Activated naive CD8-positive, alpha-beta T cell treated with anti-CD3 and anti-CD28 coated beads, Interleukin-2, amount 10 ng/mL, durations not matched to agents 7 days and 5 days (primary cell): ENCODE measurements at regions of chr1 and their contacts with region 1.

Region 1: GRCh38 chr1:45583264-45583665 is 576 bp upstream of the NASP start:
- DNase-seq: peak; percentile 90
- ATAC-seq: peak; percentile 75
- H3K4me3 Mint-ChIP-seq: peak overlapping the region; percentile 93
- H3K27ac Mint-ChIP-seq: peak overlapping the region; percentile 100
- H3K4me1 Mint-ChIP-seq: peaks cover 23% of the 10 kb centered on the region
- H3K27me3 Mint-ChIP-seq: no peaks in the 10 kb centered on the region

Region 2: DNA sequence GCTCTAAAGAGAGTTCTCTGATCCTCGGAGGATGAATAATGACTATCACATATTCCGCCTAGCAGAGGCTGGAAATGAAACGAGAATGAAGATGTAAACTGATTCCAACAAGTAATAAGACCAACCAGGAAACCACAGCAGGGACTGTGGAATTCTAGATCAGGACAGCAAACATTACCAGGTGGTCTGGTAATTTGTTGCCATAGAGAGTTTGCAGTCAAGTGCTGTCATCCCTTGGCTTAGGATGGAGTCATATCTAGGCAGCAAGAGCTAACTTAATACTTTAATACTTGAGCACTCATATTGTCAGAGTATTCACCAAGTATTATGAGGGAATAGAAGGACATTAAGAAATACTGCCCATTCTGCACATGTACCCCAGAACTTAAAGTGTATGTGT is 198.0 kb before region 1 on chr1:
- POLR2A ChIA-PET with region 1: no interaction called
- DNase-seq: no peak
- ATAC-seq: no peak
- H3K4me3 Mint-ChIP-seq: no peak overlapping the region
- H3K27ac Mint-ChIP-seq: no peak overlapping the region
- H3K4me1 Mint-ChIP-seq: no peaks in the 10 kb centered on the region
- H3K27me3 Mint-ChIP-seq: no peaks in the 10 kb centered on the region

Region 3: DNA sequence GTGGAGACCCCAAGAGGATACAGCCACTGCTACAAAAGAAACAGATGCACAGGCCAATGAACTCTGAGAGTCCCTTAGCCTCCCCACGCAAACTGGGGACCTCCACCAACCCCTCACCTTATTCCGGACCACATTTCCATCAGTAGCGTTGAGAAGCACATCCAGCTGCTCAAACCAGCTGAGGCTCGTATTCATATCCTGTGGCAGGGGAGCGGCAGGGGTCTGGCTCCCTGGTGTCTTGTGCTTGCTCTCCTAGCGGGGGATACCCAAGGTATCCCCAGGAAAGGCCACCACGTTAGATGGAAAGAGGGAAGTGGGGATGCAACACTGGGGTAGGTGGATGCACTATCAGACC is 83.9 kb before region 1 on chr1:
- POLR2A ChIA-PET with region 1: interaction called, 32 read pairs
- DNase-seq: no peak
- ATAC-seq: no peak
- H3K4me3 Mint-ChIP-seq: peak overlapping the region; percentile 94
- H3K27ac Mint-ChIP-seq: peak overlapping the region; percentile 94
- H3K4me1 Mint-ChIP-seq: peaks cover 24% of the 10 kb centered on the region
- H3K27me3 Mint-ChIP-seq: no peaks in the 10 kb centered on the region

Region 4: GRCh38 chr1:45550401-45551351 is 32.6 kb before region 1 on chr1 and contains the start of gene AKR1A1:
- POLR2A ChIA-PET with region 1: interaction called, 21 read pairs
- DNase-seq: peak; percentile 94
- ATAC-seq: peak; percentile 92
- H3K4me3 Mint-ChIP-seq: peak within 1 kb of the TSS; percentile 94
- H3K27ac Mint-ChIP-seq: peak within 1 kb of the TSS; percentile 89
- H3K4me1 Mint-ChIP-seq: peaks cover 16% of the 10 kb centered on the region
- H3K27me3 Mint-ChIP-seq: peaks cover 8% of the 10 kb centered on the region
- total RNA-seq, gene AKR1A1: 102 to 116 TPM